WTC11 (cell line): ENCODE measurements at regions of chr15 and their contacts with region 1.

Region 1: DNA sequence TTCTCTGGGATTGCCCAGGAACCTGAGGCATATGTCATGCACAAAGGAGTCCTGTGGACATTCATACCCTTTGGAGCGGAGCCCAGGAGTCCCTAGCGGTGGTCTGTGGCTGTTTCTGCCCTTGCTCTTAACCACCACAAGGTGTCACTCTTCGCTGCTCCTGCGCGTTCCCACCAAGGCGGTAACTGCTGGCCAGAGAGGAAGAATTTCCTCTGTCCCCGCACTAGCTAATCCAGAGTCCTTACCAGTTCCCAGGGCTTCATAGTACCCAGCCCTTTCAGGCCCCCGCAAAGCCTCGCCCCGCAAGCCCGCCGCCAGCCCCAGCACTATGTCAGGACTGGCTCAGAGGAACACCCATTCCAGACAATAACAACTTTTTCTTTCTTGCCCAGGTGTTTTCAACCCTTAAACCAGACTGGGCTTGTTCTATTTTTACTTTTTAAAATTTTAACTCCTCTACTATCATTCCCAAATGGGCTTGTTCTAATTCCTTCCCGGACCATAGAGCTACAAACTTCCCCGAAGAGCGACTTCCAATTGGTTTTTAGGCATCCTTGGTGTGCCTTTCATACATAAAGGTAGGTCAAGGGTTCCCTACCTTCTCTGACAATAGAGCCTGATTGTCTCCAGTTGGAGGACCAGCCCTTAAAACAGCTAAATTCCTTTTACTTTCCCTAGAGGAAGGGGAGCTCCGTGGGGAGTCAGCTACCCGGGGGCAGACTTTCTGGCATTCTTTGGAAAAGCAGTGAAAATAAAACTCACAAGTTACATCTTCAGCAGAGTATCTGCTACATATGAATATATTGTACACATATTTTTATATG is 31.8 kb upstream of the ZNF774 start:
- DNase-seq: peak; percentile 80
- ATAC-seq: peak; percentile 96
- H3K4me3 Mint-ChIP-seq: peak overlapping the region; percentile 68
- H3K27ac Mint-ChIP-seq: peak overlapping the region; percentile 95
- H3K4me1 Mint-ChIP-seq: peaks cover 13% of the 10 kb centered on the region
- H3K27me3 Mint-ChIP-seq: no peaks in the 10 kb centered on the region
- CTCF ChIP-seq: peak; percentile 89

Region 2: DNA sequence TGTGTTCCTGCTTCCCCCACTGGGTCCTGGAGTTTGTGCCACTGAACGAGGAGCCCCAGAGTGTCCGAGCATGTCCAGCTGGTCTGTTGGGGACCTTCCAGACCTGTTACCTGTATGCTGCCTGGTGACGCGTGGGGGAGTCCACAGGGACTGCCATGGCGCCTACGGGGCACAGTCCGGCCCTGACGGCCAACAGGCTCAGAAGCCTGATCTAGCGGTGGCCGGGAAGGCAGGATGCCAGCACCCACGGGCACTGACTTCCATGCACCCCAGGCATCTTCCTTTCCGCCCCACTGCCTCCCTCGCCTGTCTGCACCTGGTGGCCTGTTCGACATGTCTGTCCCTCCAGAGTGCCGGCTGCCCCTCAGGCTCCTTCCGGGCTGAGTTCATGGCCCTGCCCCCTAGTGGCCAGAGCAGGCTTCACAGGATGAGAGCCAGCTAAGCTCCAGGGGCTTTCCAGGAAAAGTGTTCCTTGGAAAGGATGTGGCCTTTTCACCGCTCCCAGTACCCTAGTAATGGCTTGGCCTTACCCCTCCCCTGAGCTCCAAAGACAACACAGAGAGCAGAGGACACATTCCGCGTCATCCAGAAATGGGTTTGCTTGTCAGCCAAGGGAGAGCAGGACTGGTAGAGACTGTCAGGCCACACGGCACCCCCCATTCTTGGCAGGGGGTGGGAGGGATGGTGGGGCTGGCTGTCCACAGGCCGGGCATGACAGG is 19.1 kb before region 1 on chr15:
- CTCF ChIA-PET with region 1: interaction called, 68 read pairs
- POLR2A ChIA-PET with region 1: no interaction called
- DNase-seq: peak; percentile 92
- ATAC-seq: peak; percentile 91
- H3K4me3 Mint-ChIP-seq: no peak overlapping the region
- H3K27ac Mint-ChIP-seq: no peak overlapping the region
- H3K4me1 Mint-ChIP-seq: peaks cover 14% of the 10 kb centered on the region
- H3K27me3 Mint-ChIP-seq: no peaks in the 10 kb centered on the region; the same call in 1 of the 2 replicates
- CTCF ChIP-seq: peak; percentile 98

Region 3: DNA sequence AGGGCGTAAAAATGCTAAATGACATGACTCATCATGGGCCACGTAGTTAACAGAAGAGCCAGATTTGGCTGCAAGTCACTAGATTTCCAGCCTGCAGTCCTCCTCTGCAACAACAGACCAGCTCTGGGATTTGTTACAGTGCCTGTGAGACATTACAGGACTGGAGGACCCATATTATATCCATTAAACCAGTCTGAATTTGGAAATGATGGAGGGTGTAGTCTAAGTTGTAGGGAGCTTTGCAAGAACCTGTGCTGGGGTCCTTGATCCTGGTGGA is 42.6 kb after region 1 on chr15:
- CTCF ChIA-PET with region 1: interaction called, 13 read pairs
- POLR2A ChIA-PET with region 1: no interaction called
- DNase-seq: no peak
- ATAC-seq: no peak
- H3K4me3 Mint-ChIP-seq: no peak overlapping the region
- H3K27ac Mint-ChIP-seq: no peak overlapping the region; the same call in 1 of the 2 replicates
- H3K4me1 Mint-ChIP-seq: peaks cover 18% of the 10 kb centered on the region
- H3K27me3 Mint-ChIP-seq: no peaks in the 10 kb centered on the region
- CTCF ChIP-seq: no peak

Region 4: GRCh38 chr15:90451053-90451850 is 131.0 kb after region 1 on chr15:
- CTCF ChIA-PET with region 1: interaction called, 22 read pairs
- POLR2A ChIA-PET with region 1: no interaction called
- DNase-seq: no peak
- ATAC-seq: peak; percentile 97
- H3K4me3 Mint-ChIP-seq: no peak overlapping the region
- H3K27ac Mint-ChIP-seq: peak overlapping the region; percentile 86
- H3K4me1 Mint-ChIP-seq: peaks cover 17% of the 10 kb centered on the region
- H3K27me3 Mint-ChIP-seq: no peaks in the 10 kb centered on the region
- CTCF ChIP-seq: no peak

Region 5: GRCh38 chr15:90512981-90513380 is 192.7 kb after region 1 on chr15:
- CTCF ChIA-PET with region 1: interaction called, 10 read pairs
- POLR2A ChIA-PET with region 1: no interaction called
- DNase-seq: no peak
- ATAC-seq: no peak
- H3K4me3 Mint-ChIP-seq: no peak overlapping the region
- H3K27ac Mint-ChIP-seq: no peak overlapping the region
- H3K4me1 Mint-ChIP-seq: peaks cover 2% of the 10 kb centered on the region
- H3K27me3 Mint-ChIP-seq: no peaks in the 10 kb centered on the region
- CTCF ChIP-seq: no peak

Region 6: DNA sequence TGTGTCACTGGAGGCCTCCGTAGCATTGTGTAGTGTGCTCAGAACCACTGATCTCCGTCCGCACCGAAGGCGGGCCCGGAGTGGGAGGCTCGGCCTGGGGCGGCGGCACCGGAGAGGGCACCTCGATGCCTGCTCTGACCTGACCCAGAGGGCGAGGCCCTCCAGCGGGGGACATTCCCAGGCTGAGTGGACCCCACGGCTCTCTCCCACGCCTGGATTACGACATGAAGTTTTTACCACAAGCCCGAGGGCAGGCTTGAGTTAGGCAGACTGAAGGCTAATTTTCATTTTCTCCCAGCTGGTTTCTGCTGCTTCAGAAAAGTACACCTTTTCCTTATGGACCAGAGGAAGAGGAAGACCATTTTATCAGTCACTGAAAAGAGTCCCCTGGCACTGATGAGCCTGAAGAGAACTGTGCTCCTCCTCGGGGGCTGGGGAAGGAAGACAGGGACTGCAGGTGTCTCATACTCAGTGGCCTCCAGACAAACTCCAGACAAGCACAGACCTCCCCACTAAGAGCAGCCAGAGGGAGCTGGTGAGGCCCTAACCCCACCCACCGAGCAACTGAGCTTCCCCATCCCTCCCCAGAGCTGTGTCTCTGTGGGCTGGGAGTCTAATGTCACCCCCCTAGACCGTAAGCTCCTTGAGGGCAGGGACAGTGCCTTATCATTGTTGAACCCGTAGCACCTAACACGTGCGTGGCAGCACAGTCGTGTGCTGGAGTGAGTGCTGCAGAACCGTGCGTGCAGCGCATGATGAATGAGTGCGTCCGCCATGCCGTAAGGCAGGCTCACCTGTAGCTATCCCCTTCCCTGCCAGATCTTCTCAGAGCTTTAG is 322.4 kb after region 1 on chr15:
- CTCF ChIA-PET with region 1: interaction called, 14 read pairs
- POLR2A ChIA-PET with region 1: no interaction called
- DNase-seq: no peak
- ATAC-seq: peak; percentile 78
- H3K4me3 Mint-ChIP-seq: no peak overlapping the region
- H3K27ac Mint-ChIP-seq: peak overlapping the region; percentile 68
- H3K4me1 Mint-ChIP-seq: peaks cover 13% of the 10 kb centered on the region
- H3K27me3 Mint-ChIP-seq: no peaks in the 10 kb centered on the region
- CTCF ChIP-seq: no peak